Panc1 (cell line): ENCODE measurements at regions of chr3 and their contacts with region 1.

Region 1: GRCh38 chr3:129183569-129184395 is at the start of gene CNBP:
- DNase-seq: no peak
- ATAC-seq: peak; percentile 98
- H3K4me3 ChIP-seq: peak within 1 kb of the TSS; percentile 76
- H3K27ac ChIP-seq: peak within 1 kb of the TSS; percentile 98
- H3K4me1 ChIP-seq: peaks cover 25% of the 10 kb centered on the region
- H3K27me3 ChIP-seq: no peaks in the 10 kb centered on the region
- CTCF ChIP-seq: no peak
- total RNA-seq, gene CNBP: 355 TPM

Region 2: DNA sequence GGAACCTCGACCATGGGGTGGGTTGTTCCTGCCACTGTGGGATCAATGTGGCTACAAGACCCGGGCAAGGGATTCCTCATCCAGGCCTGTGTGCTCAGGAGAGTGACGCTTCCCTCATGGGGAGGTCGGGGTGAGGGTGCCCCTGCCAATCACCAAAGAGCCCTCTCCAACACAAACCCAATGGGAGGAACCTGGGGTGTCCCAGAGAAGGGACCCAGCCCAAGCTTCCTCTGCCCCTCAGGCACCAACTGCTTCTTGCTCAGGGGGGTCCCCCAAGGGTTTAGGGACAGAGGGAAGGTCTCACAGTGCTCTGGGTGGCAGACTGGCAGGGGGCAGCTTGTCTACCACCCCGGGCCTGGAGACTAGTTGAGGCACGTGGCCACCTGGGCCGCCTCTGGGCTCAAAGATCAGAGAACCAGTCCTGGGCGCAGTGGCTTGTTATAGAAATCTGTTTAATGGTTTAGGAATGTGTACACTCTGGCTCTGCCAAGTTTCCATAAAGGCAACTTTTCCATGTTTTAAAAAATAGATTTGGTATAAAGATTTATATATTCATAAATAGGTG is 96.6 kb before region 1 on chr3:
- CTCF ChIA-PET with region 1: no interaction called
- POLR2A ChIA-PET with region 1: no interaction called
- in situ Hi-C with region 1: no loop called
- intact Hi-C with region 1: no loop called
- DNase-seq: no peak
- ATAC-seq: no peak
- H3K4me3 ChIP-seq: no peak overlapping the region
- H3K27ac ChIP-seq: 0 out of 2 replicates have a peak overlapping the region, but pooled peaks have one; percentile 12
- H3K4me1 ChIP-seq: peaks cover 4% of the 10 kb centered on the region
- H3K27me3 ChIP-seq: no peaks in the 10 kb centered on the region
- CTCF ChIP-seq: no peak

Region 3: GRCh38 chr3:129160891-129161859 is 22.6 kb before region 1 on chr3 and contains the start of gene ISY1:
- CTCF ChIA-PET with region 1: no interaction called
- POLR2A ChIA-PET with region 1: interaction called, 10 read pairs
- in situ Hi-C with region 1: no loop called
- intact Hi-C with region 1: no loop called
- DNase-seq: peak; percentile 97
- ATAC-seq: peak; percentile 92
- H3K4me3 ChIP-seq: peak within 1 kb of the TSS; percentile 95 to 98
- H3K27ac ChIP-seq: peak within 1 kb of the TSS; percentile 100
- H3K4me1 ChIP-seq: peaks cover 23% of the 10 kb centered on the region
- H3K27me3 ChIP-seq: no peaks in the 10 kb centered on the region
- CTCF ChIP-seq: peak; percentile 96
- total RNA-seq, gene ISY1: 45.7 TPM